ENCODE measurements at regions of chr1 and their contacts with region 1.

Region 1: DNA sequence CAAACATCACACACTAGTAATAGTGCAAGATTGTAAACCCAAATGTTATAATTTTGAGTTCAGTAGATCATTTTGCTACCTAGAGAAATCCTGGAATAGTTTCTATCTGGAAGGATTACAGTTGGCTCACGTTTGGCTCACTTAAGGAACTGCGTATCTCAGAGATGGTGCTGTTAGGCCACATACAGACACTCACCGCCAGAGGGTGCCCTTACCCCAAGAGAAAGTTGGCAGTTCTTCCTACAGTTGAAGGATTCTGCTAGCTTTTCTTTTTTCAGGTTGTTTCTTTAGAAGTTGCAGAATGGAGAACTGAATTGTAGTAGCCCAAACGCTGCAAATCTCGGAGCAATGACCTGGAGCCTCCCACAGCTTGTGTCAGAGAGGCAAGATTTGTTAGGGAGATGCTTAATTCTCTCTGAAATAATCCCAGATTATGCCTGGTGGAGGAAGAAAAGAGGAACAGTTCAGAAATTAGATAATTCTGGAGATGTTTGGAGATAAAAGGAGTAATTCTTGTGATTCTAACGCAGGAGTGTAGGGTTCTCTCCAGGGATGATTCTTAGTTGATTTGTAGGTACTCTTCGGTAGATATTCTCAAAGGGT is 87.9 kb upstream of the PAPPA2 start:
- DNase-seq: peak; percentile 87
- H3K4me3 Mint-ChIP-seq: no peak overlapping the region
- H3K27ac Mint-ChIP-seq: no peak overlapping the region
- H3K4me1 Mint-ChIP-seq: no peaks in the 10 kb centered on the region
- H3K27me3 Mint-ChIP-seq: peaks cover 10% of the 10 kb centered on the region

Region 2: DNA sequence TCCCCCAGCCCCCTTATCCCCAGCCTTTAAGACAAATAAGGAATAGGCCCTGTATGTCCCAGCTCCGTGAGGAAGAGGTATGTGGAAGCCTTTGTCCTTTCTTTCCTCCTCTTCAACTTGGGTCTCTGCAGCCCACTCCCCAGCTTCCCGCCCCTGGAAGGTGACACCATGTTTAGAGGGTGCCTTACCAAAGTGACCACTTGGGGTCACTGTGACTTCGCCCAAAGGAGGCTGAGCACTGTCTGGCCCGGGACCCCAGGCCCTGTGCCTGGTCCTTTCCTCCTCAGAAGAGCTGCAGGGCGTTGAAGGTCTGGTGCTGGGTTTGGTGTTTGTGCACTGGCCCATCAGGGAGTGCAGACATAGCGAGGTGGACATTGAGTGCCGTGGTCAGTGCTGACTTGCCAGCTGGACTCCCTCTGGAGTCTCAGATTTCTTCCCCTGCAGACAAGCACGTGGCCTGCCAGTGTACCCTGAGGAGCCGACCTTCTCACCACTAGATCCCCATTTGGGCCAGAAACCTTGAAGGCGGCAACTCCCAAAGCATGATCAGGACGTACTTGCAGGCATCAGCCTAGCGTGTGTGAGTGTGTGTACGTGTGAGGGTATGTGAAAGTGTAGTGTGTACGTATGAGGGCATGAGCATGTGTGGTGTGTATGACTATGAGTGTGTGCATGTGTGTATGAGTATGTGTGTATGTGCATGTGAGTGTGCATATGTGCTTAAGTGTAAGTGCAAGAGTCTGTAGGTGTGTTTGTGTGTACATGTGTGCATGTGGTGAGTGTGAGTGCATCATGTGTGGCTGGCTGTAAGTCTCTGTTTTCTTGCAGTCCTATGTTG is 1001.1 kb before region 1 on chr1:
- CTCF ChIA-PET with region 1: no interaction called
- intact Hi-C with region 1: loop called (anchors 10 kb)
- DNase-seq: peak; percentile 42
- H3K4me3 Mint-ChIP-seq: no peak overlapping the region
- H3K27ac Mint-ChIP-seq: no peak overlapping the region
- H3K4me1 Mint-ChIP-seq: no peaks in the 10 kb centered on the region
- H3K27me3 Mint-ChIP-seq: peaks cover 13% of the 10 kb centered on the region

Region 3: DNA sequence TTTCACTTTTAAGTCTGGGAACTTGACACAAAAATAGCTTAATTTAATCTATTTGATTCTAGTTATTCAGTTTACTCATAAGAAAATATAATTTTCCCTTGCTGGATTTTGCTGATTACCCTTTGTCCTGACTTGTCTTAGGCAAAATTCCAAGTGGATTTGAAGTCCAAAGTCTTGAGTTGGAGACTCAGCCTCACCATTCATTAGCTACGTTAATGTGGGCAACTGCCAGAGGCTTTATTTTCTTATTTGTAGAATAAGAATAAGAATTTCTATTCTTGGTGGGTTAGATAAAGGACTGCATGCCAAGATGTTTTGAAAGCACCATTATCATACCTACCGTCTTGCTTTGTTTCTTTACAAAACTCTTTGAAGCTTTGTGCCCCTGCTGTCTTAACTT is 65.1 kb after region 1 on chr1:
- CTCF ChIA-PET with region 1: no interaction called
- intact Hi-C with region 1: no loop called
- DNase-seq: no peak
- H3K4me3 Mint-ChIP-seq: no peak overlapping the region
- H3K27ac Mint-ChIP-seq: no peak overlapping the region
- H3K4me1 Mint-ChIP-seq: no peaks in the 10 kb centered on the region
- H3K27me3 Mint-ChIP-seq: peaks cover 3% of the 10 kb centered on the region

Region 4: DNA sequence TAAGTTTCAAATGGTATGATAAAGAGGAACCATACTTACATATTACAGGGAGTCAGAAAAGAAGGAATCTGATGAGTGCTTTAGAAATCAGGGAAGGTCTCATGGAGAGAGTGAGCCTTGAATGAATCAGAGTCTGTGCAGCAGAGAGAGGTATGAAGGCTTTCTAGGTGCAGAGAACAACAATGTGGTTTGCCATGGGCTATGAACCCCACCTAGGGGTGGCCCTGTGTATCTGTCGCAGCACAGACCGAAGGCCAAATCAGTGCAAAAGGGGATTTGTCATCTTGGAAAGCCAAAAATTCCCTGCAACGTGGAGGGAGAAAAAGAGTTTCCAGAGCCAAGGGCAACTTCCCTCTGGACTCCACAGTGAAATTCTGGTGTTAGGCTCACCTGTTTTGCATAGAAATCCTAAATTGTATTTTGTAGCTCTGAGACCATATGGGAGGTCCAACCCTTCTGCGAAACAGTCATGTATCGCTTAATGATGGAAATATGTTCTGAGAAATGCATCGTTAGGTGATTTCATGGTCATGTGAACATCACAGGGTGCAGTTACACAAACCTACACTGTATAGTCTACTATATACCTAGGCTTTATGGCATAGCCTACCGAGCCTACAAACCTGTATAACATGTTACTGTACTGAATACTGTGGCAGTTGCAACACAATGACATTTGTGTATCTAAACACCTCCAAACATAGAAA is 91.6 kb after region 1 on chr1:
- CTCF ChIA-PET with region 1: no interaction called
- intact Hi-C with region 1: loop called (anchors 1 kb)
- DNase-seq: no peak
- H3K4me3 Mint-ChIP-seq: no peak overlapping the region
- H3K27ac Mint-ChIP-seq: no peak overlapping the region
- H3K4me1 Mint-ChIP-seq: no peaks in the 10 kb centered on the region
- H3K27me3 Mint-ChIP-seq: no peaks in the 10 kb centered on the region

Region 5: GRCh38 chr1:176691251-176692228 is 316.5 kb after region 1 on chr1:
- CTCF ChIA-PET with region 1: interaction called, 7 read pairs
- intact Hi-C with region 1: loop called (anchors 1 kb)
- DNase-seq: peak; percentile 21
- H3K4me3 Mint-ChIP-seq: no peak overlapping the region
- H3K27ac Mint-ChIP-seq: no peak overlapping the region
- H3K4me1 Mint-ChIP-seq: no peaks in the 10 kb centered on the region
- H3K27me3 Mint-ChIP-seq: no peaks in the 10 kb centered on the region

Region 6: GRCh38 chr1:177181631-177182291 is 806.7 kb after region 1 on chr1:
- CTCF ChIA-PET with region 1: no interaction called
- intact Hi-C with region 1: loop called (anchors 10 kb)
- DNase-seq: peak; percentile 42
- H3K4me3 Mint-ChIP-seq: peak overlapping the region; percentile 36
- H3K27ac Mint-ChIP-seq: no peak overlapping the region
- H3K4me1 Mint-ChIP-seq: peaks cover 8% of the 10 kb centered on the region
- H3K27me3 Mint-ChIP-seq: peaks cover 48% of the 10 kb centered on the region

Measured in activated naive CD4-positive, alpha-beta T cell treated with anti-CD3 and anti-CD28 coated beads for 36 hours (primary cell).